Posterior vena cava (tissue), 2 donors: ENCODE measurements at regions of chr3 and their contacts with region 1.

Region 1: DNA sequence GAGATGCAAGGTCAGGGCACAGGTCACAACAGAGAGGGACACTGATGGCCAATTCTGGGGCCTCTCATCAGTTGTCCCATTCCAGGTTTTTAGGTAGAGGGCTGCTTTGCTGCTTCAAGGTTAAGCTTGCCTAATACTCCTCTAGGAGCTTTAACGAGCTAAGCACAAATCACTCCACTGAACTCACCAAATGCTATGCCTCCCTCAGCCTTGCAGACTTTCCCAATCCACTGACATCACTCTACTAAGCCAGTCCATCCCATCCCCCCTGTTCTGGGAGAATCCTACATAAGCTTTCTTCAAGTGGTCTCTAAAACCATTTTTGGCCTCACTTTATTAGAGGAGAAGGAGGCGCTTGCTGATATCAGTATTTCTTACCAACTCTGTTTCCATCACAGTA is 24.8 kb upstream of the PDCD6IP start:
- DNase-seq: no peak

Region 2: DNA sequence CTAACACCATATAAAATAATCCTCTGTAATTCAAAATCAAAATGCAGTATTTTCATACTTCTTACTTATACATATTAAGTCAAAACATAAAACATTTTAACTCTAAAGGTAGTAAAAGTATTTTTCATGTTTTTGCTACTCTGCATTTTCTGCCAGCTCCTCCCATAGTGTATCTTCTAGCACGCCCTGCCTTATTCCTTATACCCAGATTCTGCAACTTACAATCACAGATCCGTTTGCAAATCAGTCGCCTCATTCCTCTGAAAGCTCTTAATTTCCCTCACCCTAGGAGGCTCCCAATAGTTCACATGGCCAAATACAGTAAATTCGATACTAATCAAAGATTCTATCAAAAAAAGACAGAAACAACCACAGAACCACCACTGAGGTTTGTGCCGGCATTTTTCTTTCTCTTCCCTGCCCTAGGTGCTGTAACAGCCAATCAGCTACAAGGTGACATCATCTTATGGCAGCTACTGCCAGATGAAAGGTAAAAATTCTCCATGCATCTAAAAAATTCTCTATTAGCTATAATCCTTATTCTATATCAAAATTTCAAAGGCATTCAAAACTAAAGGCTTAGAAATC is 128.5 kb before region 1 on chr3:
- intact Hi-C with region 1: loop called in 1 of 2 experiments (anchors 5 kb)
- DNase-seq: no peak

Region 3: GRCh38 chr3:33798411-33799201 is 25.0 kb after region 1 on chr3 and contains the start of gene PDCD6IP:
- intact Hi-C with region 1: no loop called
- DNase-seq: peak; percentile 98
- total RNA-seq, gene PDCD6IP: 165 to 222 TPM